ENCODE measurements at regions of chr11 and their contacts with region 1.

Region 1: GRCh38 chr11:65859200-65859811 is 927 bp upstream of the MUS81 start:
- DNase-seq: peak; percentile 88
- H3K4me3 ChIP-seq: peak overlapping the region; percentile 95
- CTCF ChIP-seq: peak; percentile 25

Region 2: GRCh38 chr11:65497141-65498041 is 361.9 kb before region 1 on chr11:
- CTCF ChIA-PET with region 1: no interaction called
- POLR2A ChIA-PET with region 1: no interaction called
- DNase-seq: no peak
- H3K4me3 ChIP-seq: peak overlapping the region; percentile 68
- CTCF ChIP-seq: no peak

Region 3: GRCh38 chr11:65695456-65696241 is 163.7 kb before region 1 on chr11:
- CTCF ChIA-PET with region 1: no interaction called
- POLR2A ChIA-PET with region 1: no interaction called
- DNase-seq: no peak
- H3K4me3 ChIP-seq: no peak overlapping the region
- CTCF ChIP-seq: no peak

Region 4: DNA sequence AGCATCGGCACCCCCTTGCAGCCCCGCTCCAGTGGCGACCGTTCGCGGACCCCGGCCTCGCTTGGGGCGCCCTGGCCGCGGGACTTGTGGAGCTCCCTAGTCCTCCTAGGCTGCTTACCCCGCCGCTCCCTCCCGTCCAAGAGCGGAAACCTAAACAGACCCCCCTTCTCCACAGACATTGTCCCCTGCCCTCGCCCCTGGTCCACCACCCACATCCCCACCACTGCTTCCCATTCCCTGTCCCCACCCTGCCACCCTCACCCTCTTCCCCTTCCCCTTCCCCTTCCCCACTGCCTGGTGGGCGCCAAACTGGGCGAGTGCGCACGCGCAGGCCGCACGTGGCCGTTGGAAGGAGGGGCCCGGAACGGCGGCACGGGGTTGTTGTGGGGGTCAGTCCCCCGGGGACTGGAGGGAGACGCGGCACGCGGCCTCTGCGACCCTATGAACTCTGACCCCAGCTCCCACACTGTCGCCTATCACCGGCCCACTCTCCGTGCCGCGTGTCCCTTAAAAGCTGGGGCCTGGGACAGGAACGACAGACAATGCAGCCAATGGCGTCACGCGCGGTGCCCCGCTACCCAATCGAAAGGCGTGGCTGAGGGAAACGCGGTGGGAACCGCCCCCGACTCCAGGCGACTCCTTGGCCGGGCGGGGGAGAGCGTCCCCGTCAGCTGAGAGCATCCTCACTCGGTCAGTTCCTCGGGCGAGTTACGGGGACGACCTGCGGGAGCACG is 25.8 kb before region 1 on chr11 and contains the start of gene SNX32:
- CTCF ChIA-PET with region 1: interaction called, 12 read pairs
- POLR2A ChIA-PET with region 1: interaction called, 7 read pairs
- DNase-seq: no peak
- H3K4me3 ChIP-seq: peak within 1 kb of the TSS; percentile 75
- CTCF ChIP-seq: no peak

Region 5: GRCh38 chr11:65873318-65874156 is 14.2 kb after region 1 on chr11:
- CTCF ChIA-PET with region 1: interaction called, 174 read pairs
- POLR2A ChIA-PET with region 1: interaction called, 103 read pairs
- DNase-seq: no peak
- H3K4me3 ChIP-seq: peak overlapping the region; percentile 80
- CTCF ChIP-seq: no peak

Region 6: DNA sequence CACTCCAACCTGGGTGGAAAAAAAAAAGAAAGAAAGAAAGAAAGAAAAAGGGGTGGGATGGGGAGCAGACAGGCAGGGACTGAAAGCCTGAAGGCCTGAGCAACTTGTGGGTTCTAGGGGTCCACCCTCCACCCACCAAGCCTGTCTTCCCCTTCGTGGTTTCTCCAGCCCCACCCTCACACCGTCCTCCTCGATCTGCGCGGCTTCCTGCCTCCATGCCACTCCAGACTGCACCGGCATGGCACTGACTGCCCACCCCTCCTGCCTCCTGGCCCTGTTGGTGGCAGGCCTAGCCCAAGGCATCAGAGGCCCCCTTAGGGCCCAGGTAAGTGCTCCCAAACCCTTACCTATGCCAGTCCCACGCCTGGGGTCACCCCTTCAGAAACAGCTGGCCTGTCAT is 20.3 kb after region 1 on chr11 and contains the start of gene CTSW:
- CTCF ChIA-PET with region 1: interaction called, 174 read pairs
- POLR2A ChIA-PET with region 1: interaction called, 12 read pairs
- DNase-seq: no peak
- H3K4me3 ChIP-seq: no peak within 1 kb of the TSS
- CTCF ChIP-seq: no peak

Region 7: DNA sequence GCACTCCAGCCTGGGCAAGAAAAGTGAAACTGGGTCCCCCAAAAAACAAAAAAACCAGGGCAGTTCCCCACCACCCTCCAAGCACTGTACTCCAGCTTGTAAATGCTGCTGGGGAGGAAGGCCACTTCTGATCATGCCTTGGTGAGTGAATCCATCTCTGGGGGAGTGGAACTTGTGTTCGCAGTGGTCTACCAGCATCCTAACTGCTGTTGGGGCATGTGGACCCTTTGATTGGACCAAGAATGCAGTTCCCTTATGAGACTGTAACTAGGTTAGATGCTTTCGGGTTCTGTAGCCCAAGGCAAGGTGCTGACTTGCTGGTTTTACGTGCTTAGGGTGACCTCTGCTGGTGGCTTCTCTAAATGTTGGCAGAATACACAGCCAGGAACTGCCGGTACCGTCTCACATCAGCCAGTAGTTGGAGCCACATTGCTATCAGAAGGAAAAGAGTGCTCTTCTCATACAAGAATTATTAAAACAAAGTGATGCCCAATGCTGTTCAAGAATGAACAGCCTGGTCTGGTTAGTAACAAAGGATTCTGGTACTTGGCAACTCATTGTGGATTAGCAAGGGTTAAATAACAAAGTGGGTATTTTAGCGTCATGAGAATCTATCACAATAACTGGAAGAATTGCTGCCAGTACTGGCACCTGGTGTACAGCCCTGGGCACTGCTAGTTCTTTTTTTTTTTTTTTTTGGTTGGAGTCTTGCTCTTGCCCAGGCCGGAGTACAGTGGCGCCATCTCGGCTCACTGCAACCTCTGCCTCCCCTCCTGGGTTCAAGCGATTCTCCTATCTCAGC is 129.7 kb after region 1 on chr11:
- CTCF ChIA-PET with region 1: interaction called, 14 read pairs
- POLR2A ChIA-PET with region 1: interaction called, 4 read pairs
- DNase-seq: peak; percentile 79
- H3K4me3 ChIP-seq: no peak overlapping the region
- CTCF ChIP-seq: peak; percentile 94

Measured in AG04449 (cell line).